ENCODE measurements at regions of chr2 and their contacts with region 1.

Region 1: DNA sequence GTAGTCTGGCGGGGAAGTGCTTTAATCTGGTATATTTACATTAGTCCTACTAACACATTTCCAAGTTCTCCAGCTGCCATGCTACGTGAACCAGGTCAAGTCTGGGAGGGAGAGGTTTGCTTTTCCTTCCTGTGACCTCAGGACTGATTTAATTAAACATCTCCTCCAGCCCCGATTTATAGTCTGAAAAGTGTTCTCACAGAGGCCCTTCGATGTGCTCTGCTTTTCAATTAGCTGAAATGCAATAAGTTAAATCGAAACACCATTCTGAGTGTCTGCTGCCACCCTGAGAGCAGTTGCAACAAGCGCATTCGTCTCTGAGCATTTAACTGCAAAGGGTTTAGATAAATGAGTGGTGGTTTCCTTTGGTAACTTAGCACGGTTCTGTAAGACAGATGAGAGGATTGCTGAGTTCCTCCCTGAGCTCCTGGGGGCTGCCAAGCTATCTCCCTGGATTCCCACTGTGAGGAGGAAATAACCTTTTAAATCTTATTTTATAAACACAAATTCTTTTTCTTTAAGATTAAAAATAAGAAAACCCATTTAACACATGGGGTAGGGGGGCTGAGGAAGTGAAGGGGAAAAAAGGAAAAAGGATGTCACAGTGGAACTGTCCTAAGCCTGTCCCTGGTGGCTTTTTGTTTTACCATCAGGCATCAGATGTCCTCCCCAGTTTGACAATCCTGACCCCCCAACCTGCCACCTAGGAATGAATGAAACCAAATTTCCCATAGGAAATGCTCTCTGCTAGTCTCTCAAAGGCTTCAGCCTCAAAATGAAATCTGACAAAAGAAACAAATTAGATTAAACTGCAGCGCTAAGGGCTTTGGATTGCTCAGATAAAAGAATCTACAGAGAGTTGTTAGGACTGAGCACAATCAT is 56.5 kb upstream of the CREB1 start:
- DNase-seq: peak; percentile 72
- H3K4me3 Mint-ChIP-seq: no peak overlapping the region
- H3K27ac Mint-ChIP-seq: no peak overlapping the region
- H3K4me1 Mint-ChIP-seq: peaks cover 23% of the 10 kb centered on the region
- H3K27me3 Mint-ChIP-seq: peaks cover 7% of the 10 kb centered on the region

Region 2: GRCh38 chr2:206800506-206801417 is 672.5 kb before region 1 on chr2:
- CTCF ChIA-PET with region 1: interaction called, 97 read pairs
- DNase-seq: peak; percentile 67
- H3K4me3 Mint-ChIP-seq: peak overlapping the region; percentile 58
- H3K27ac Mint-ChIP-seq: no peak overlapping the region
- H3K4me1 Mint-ChIP-seq: peaks cover 18% of the 10 kb centered on the region
- H3K27me3 Mint-ChIP-seq: no peaks in the 10 kb centered on the region

Region 3: DNA sequence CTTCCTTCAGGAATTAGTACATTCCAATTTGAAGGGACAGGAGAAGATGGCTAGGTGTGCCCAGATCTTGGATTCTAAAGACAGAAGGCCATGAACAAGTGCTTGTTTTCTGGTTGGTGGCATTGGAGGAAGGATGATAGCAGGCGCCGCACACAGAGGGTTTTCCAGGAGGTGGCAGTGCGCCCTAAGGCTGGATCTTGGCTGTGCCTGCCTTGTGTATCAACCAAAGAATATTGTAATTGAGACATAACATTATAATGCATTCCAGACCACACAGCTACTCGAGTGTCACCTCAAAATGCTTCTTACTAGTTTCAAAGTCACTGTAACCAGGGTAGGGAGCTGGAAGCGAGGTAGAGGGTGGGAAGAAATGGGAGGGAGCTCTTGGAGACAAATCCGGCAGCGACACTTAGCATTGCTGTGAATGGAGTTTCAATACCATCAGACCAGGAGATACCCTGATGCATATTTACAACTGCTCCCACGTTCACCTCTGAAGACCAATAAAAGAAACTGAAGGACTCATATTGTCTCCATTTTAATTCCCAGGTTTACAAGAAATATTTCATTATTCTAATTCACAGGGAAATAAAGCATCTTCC is 491.4 kb before region 1 on chr2:
- CTCF ChIA-PET with region 1: interaction called, 24 read pairs
- DNase-seq: peak; percentile 70
- H3K4me3 Mint-ChIP-seq: no peak overlapping the region
- H3K27ac Mint-ChIP-seq: no peak overlapping the region
- H3K4me1 Mint-ChIP-seq: peaks cover 6% of the 10 kb centered on the region
- H3K27me3 Mint-ChIP-seq: no peaks in the 10 kb centered on the region

Region 4: DNA sequence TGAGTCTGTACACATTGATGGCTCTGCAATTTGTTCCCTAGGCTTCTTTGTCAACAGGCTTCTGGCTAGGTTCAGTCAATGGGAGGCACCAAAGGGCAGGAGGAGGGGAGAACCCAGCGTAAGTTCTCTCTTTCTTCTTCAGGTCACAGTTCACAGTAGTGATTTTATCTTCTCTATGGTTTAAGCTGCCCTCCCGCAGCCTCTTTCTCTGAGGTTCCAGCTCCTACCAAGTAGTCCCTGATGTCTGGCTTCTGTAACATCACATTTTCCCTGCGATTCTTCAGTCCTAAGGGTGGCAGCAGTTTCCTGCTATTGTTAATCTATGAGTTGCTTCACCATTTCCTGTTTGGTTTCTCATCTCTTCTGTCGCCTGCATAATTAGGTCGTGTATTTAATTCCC is 426.6 kb before region 1 on chr2:
- CTCF ChIA-PET with region 1: interaction called, 43 read pairs
- DNase-seq: peak; percentile 43
- H3K4me3 Mint-ChIP-seq: no peak overlapping the region
- H3K27ac Mint-ChIP-seq: no peak overlapping the region
- H3K4me1 Mint-ChIP-seq: peaks cover 14% of the 10 kb centered on the region
- H3K27me3 Mint-ChIP-seq: peaks cover 4% of the 10 kb centered on the region

Region 5: GRCh38 chr2:207143215-207144172 is 329.8 kb before region 1 on chr2:
- CTCF ChIA-PET with region 1: interaction called, 12 read pairs
- DNase-seq: peak; percentile 83
- H3K4me3 Mint-ChIP-seq: peak overlapping the region; percentile 68
- H3K27ac Mint-ChIP-seq: peak overlapping the region; percentile 98
- H3K4me1 Mint-ChIP-seq: peaks cover 79% of the 10 kb centered on the region
- H3K27me3 Mint-ChIP-seq: no peaks in the 10 kb centered on the region

Region 6: GRCh38 chr2:207352978-207353671 is 120.2 kb before region 1 on chr2:
- CTCF ChIA-PET with region 1: interaction called, 15 read pairs
- DNase-seq: peak; percentile 62
- H3K4me3 Mint-ChIP-seq: no peak overlapping the region
- H3K27ac Mint-ChIP-seq: peak overlapping the region; percentile 49
- H3K4me1 Mint-ChIP-seq: peaks cover 12% of the 10 kb centered on the region
- H3K27me3 Mint-ChIP-seq: peaks cover 4% of the 10 kb centered on the region

Region 7: GRCh38 chr2:207513551-207514257 is 40.4 kb after region 1 on chr2:
- CTCF ChIA-PET with region 1: no interaction called
- DNase-seq: no peak
- H3K4me3 Mint-ChIP-seq: no peak overlapping the region
- H3K27ac Mint-ChIP-seq: no peak overlapping the region
- H3K4me1 Mint-ChIP-seq: peaks cover 11% of the 10 kb centered on the region
- H3K27me3 Mint-ChIP-seq: peaks cover 3% of the 10 kb centered on the region